Activated CD4-positive, alpha-beta T cell treated with anti-CD3 and anti-CD28 coated beads for 36 hours (primary cell): ENCODE measurements at regions of chr3 and their contacts with region 1.

Region 1: GRCh38 chr3:126509597-126510307 is 7.8 kb downstream of the UROC1 start:
- DNase-seq: no peak
- ATAC-seq: no peak
- H3K4me3 Mint-ChIP-seq: no peak overlapping the region
- H3K27ac Mint-ChIP-seq: no peak overlapping the region
- H3K4me1 Mint-ChIP-seq: no peaks in the 10 kb centered on the region
- H3K27me3 Mint-ChIP-seq: no peaks in the 10 kb centered on the region

Region 2: GRCh38 chr3:126522363-126522788 is 12.6 kb after region 1 on chr3:
- CTCF ChIA-PET with region 1: interaction called, 14 read pairs
- POLR2A ChIA-PET with region 1: no interaction called
- intact Hi-C with region 1: no loop called
- DNase-seq: peak; percentile 53
- ATAC-seq: no peak
- H3K4me3 Mint-ChIP-seq: no peak overlapping the region
- H3K27ac Mint-ChIP-seq: no peak overlapping the region
- H3K4me1 Mint-ChIP-seq: no peaks in the 10 kb centered on the region
- H3K27me3 Mint-ChIP-seq: peaks cover 7% of the 10 kb centered on the region

Region 3: DNA sequence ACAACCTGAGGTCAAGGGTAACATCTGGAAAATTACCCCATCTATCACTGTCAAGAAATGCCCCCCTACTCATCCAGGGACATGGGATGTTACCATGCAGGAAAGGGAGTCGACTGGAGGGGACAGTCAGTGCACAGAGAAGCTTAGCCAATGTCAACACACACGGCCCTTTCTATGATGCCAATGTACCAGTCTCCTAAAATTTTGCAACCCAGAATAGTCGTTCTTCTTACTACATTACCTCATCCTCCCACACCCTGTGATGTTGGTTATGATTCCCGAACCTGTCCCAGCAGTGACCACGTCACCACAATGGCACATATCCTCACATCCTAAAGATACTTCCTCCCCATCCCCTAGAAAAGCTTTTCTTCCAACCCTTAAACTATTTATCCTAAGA is 125.1 kb after region 1 on chr3:
- CTCF ChIA-PET with region 1: no interaction called
- POLR2A ChIA-PET with region 1: no interaction called
- intact Hi-C with region 1: no loop called
- DNase-seq: no peak
- ATAC-seq: no peak
- H3K4me3 Mint-ChIP-seq: no peak overlapping the region
- H3K27ac Mint-ChIP-seq: no peak overlapping the region
- H3K4me1 Mint-ChIP-seq: no peaks in the 10 kb centered on the region
- H3K27me3 Mint-ChIP-seq: no peaks in the 10 kb centered on the region

Region 4: GRCh38 chr3:126835898-126836860 is 326.4 kb after region 1 on chr3:
- CTCF ChIA-PET with region 1: no interaction called
- POLR2A ChIA-PET with region 1: no interaction called
- intact Hi-C with region 1: no loop called
- DNase-seq: no peak
- ATAC-seq: no peak
- H3K4me3 Mint-ChIP-seq: no peak overlapping the region
- H3K27ac Mint-ChIP-seq: no peak overlapping the region
- H3K4me1 Mint-ChIP-seq: no peaks in the 10 kb centered on the region
- H3K27me3 Mint-ChIP-seq: no peaks in the 10 kb centered on the region

Region 5: DNA sequence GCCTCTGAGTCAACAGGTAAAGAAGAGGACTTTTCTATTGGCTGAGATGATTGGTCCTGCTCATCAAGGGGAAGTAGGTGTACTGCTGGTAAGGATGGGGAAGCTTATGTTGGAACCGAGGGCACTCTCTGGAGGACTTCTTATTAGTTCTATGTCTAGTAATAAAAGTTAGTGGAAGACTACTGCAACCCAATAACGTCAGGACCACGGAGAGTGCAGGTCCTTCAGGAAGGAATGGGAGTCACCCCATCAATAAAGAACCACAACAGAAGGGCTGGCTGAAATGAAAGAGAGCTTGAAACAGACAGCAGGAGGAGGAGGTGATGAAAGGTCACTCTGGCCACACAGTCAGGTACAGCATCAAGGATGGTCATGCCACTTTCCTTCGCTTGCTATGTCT is 614.4 kb after region 1 on chr3:
- CTCF ChIA-PET with region 1: no interaction called
- POLR2A ChIA-PET with region 1: no interaction called
- intact Hi-C with region 1: no loop called
- DNase-seq: no peak
- ATAC-seq: no peak
- H3K4me3 Mint-ChIP-seq: no peak overlapping the region
- H3K27ac Mint-ChIP-seq: no peak overlapping the region
- H3K4me1 Mint-ChIP-seq: no peaks in the 10 kb centered on the region
- H3K27me3 Mint-ChIP-seq: peaks cover 12% of the 10 kb centered on the region